ENCODE measurements at regions of chr11 and their contacts with region 1.

Region 1: DNA sequence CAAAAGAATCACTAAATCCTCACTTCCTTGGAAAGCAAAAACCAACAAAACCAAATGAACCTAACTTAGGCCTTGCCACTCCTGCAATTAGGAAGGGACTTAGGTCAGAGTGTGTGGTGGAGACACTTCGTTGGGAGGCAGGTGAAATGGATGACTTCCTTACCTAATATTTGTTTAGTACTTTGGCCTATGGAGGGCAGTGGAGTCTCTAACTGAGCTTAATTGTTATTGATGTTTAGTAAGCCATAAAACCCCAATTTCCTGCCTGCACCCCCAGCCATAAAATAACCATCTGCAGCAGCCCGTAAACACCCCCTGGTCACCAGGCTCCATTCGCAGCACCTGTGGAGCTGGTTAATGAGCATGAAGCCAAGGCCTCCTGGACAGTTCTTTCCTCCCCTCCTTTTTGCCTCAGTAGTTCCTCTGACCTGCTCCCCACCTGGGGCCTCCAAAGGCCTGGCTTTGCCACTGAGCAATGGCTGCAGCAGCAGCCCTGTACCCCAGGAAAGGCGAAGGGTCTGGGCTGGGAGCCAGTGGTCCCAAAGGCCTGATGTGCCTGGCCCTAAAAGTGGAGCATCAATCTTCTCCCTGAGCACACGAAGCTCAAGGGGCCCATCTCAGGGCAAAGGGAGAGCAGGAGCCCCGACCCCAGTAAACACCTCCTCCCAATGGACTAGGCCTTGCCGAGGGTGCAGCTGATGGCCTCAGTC is 15.6 kb upstream of the SYT13 start:
- DNase-seq: no peak
- H3K4me3 ChIP-seq: no peak overlapping the region
- H3K27ac ChIP-seq: no peak overlapping the region
- H3K27me3 ChIP-seq: no peaks in the 10 kb centered on the region
- CTCF ChIP-seq: no peak

Region 2: GRCh38 chr11:44936525-44936924 is 365.2 kb before region 1 on chr11:
- intact Hi-C with region 1: loop called in 1 of 2 experiments (anchors 10 kb)
- DNase-seq: peak; percentile 74 to 94 (median 88)
- H3K4me3 ChIP-seq: peak overlapping the region in 31 of 59 donors; percentile 3 to 56 (median 32)
- H3K27ac ChIP-seq: peak overlapping the region in 5 of 59 donors; percentile 8 to 60 (median 25)
- H3K27me3 ChIP-seq: no peaks in the 10 kb centered on the region
- CTCF ChIP-seq: peak; percentile 84 to 100 (median 98)

Region 3: GRCh38 chr11:45062971-45063611 is 238.6 kb before region 1 on chr11:
- intact Hi-C with region 1: no loop called
- DNase-seq: no peak
- H3K4me3 ChIP-seq: no peak overlapping the region
- H3K27ac ChIP-seq: no peak overlapping the region
- H3K27me3 ChIP-seq: no peaks in the 10 kb centered on the region
- CTCF ChIP-seq: no peak

Region 4: GRCh38 chr11:45655347-45655756 is 353.7 kb after region 1 on chr11:
- intact Hi-C with region 1: no loop called
- DNase-seq: peak; percentile 78 to 89 (median 85)
- H3K4me3 ChIP-seq: peak overlapping the region in 19 of 59 donors; percentile 1 to 32 (median 9)
- H3K27ac ChIP-seq: peak overlapping the region in 51 of 59 donors; percentile 15 to 94 (median 65)
- H3K27me3 ChIP-seq: no peaks in the 10 kb centered on the region
- CTCF ChIP-seq: peak; percentile 75 to 95 (median 91)